Natural killer cell (primary cell): ENCODE measurements at regions of chr7 and their contacts with region 1.

Region 1: DNA sequence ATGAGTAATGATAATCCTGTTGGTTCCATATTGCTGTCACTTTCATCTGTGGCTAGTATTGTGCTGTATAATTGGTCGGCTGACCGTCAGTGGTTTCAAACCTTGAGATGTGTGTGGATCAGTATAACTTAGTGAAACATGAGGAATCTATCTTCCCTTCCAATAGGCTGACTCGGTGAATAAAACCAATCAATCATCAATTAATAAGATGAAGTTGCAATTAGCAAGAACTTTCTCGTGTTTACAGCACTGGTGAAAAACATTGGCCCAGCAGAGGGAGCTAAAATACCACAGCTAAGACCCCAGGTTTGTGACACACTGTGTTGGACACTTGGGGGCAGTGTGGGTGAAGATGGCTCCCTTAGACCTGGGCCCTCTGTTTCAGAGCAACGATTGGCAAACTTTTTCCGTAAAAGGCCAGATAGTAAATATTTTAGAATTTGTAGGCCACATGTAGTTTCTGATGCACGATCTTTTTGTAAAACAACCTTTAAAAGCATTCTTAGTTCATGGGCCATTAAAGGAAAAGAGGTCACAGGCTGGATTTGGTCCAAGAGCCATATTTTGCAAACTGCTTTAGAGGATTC is 47.8 kb downstream of the STRA8 start:
- DNase-seq: peak; percentile 54 to 91
- ATAC-seq: peak; percentile 97 to 100 (median 100)
- H3K4me3 ChIP-seq: no peak overlapping the region
- H3K4me3 Mint-ChIP-seq: no peak overlapping the region
- H3K27ac ChIP-seq: no peak overlapping the region
- H3K27ac Mint-ChIP-seq: no peak overlapping the region
- H3K4me1 ChIP-seq: no peaks in the 10 kb centered on the region
- H3K4me1 Mint-ChIP-seq: peaks cover 6% of the 10 kb centered on the region in 2 donors
- H3K27me3 ChIP-seq: no peaks in the 10 kb centered on the region
- H3K27me3 Mint-ChIP-seq: peaks cover 9 to 30% of the 10 kb centered on the region in 2 donors
- CTCF ChIP-seq: peak; percentile 98

Region 2: DNA sequence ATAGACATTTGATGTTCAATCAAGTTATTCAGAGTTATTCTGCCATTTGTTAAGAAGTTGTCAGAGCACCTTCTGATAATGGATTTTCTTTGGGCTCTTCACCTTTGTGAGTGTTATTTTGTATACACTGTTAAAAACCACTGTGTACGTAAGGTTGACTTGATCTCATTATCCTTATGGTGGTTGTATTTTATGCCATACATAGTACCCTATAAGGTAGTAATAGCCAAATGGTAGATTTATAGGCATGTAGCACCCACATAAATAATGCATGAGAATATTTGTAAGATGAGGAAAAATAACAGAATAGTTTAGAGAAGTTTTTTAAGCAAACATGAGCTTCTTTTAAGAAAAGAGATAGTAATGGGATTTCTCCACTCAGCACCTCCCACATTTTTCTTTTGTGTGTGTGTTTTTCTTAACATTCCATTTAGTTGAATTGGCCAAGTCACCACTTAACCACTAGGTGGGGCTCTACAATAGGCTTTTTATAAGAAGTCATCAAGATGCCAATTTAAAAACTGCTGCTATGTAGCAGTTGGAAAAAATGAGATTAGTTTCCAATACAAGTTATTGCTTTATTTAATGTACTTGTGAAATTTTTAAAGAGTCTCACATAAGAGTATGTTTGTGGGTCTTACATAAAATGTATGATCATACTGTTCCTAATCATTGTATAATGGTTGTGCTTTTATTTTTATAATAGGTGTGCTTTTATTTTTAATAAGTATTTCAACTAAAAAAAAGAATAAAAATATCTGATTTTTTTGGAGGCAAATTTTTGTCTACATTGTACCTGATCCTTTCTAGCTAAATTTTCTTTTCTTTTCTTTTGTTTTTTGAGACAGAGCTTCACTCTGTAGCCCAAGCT is 339.8 kb after region 1 on chr7:
- intact Hi-C with region 1: loop called (anchors 1 kb)
- DNase-seq: peak in 1 of 2 donors; percentile 67
- ATAC-seq: peak; percentile 45 to 60 (median 46)
- H3K4me3 ChIP-seq: no peak overlapping the region
- H3K4me3 Mint-ChIP-seq: no peak overlapping the region
- H3K27ac ChIP-seq: no peak overlapping the region
- H3K27ac Mint-ChIP-seq: no peak overlapping the region
- H3K4me1 ChIP-seq: no peaks in the 10 kb centered on the region
- H3K4me1 Mint-ChIP-seq: no peaks in the 10 kb centered on the region
- H3K27me3 ChIP-seq: no peaks in the 10 kb centered on the region
- H3K27me3 Mint-ChIP-seq: no peaks in the 10 kb centered on the region
- CTCF ChIP-seq: peak; percentile 87

Region 3: DNA sequence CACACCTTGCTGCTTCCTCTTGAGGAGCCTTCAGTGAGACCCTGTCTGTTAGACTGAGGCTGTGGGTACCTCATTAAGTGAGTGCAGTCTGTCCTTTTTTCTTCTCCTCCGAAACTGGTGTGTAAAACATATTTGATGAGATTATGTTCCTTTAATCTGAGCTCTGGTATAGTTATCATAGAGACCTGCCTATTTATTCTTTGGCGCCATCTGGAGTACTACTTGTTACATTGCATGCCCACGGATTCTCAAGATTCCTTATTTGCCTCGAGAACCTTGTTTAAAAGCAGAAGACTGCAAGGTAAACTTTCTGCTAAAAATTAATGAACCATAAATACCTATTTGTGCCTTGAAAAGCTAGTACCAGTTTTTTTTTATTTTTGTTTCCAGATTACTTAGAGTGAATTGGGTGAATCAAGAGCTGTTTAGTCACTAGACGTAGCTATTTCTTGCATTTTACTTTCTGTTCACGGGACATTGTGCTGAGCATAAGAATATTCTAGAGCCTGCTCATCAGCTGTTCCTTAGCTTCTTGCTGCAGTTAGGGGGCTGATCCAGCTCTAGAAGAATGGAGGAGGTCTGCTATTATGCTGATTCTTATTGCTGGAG is 363.9 kb after region 1 on chr7:
- intact Hi-C with region 1: loop called (anchors 1 kb)
- DNase-seq: peak in 1 of 2 donors; percentile 65
- ATAC-seq: peak; percentile 76 to 78 (median 76)
- H3K4me3 ChIP-seq: no peak overlapping the region
- H3K4me3 Mint-ChIP-seq: no peak overlapping the region
- H3K27ac ChIP-seq: no peak overlapping the region
- H3K27ac Mint-ChIP-seq: no peak overlapping the region
- H3K4me1 ChIP-seq: no peaks in the 10 kb centered on the region
- H3K4me1 Mint-ChIP-seq: peaks cover 0 to 7% of the 10 kb centered on the region in 2 donors
- H3K27me3 ChIP-seq: no peaks in the 10 kb centered on the region
- H3K27me3 Mint-ChIP-seq: no peaks in the 10 kb centered on the region
- CTCF ChIP-seq: peak; percentile 72